ENCODE measurements at regions of chr16 and their contacts with region 1.

Region 1: GRCh38 chr16:30692381-30693064 is 6.4 kb upstream of the SRCAP start:
- DNase-seq: no peak
- ATAC-seq: no peak
- H3K4me3 Mint-ChIP-seq: no peak overlapping the region
- H3K27ac Mint-ChIP-seq: no peak overlapping the region
- H3K4me1 Mint-ChIP-seq: peaks cover 30% of the 10 kb centered on the region
- H3K27me3 Mint-ChIP-seq: no peaks in the 10 kb centered on the region

Region 2: GRCh38 chr16:30637942-30638341 is 54.6 kb before region 1 on chr16:
- CTCF ChIA-PET with region 1: interaction called, 10 read pairs
- DNase-seq: peak; percentile 46
- ATAC-seq: no peak
- H3K4me3 Mint-ChIP-seq: no peak overlapping the region
- H3K27ac Mint-ChIP-seq: no peak overlapping the region
- H3K4me1 Mint-ChIP-seq: peaks cover 18% of the 10 kb centered on the region
- H3K27me3 Mint-ChIP-seq: no peaks in the 10 kb centered on the region

Region 3: DNA sequence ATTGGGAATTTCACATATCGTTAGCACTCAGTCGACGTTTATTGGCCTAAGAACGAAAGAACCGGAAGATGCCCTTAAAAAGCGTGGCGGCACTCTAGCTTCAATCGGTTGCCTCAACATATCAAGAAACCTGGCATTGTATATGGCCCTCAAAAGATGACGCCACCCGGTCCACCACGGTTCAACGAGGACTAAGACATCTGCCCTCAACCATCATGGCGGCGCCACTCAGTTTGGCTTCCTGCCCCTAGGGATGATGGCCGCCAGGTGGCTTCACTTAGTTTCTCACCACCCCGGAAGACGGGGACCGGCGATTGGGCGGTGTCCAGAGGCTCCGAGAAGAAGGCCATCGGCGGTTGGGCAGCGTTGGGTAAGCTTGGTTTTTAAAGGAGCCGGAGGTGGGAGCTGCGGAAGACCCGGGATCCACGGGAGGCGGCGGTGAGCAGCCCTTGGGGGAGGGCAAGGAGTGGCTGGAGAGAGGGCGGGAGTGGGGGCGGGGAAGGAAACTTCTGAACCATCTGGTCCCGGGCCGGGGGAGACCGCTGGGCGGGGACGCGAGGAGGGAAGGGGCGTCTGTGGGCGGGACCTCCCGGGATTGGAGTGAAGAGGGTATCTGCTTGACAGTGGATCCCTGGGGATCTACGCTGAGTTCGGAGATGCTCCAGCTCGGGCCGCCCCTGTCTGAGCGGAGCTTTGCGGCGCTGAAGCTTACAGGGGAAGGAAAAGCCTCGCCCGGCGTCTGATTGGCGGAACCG is 42.0 kb before region 1 on chr16 and contains the start of gene PRR14:
- CTCF ChIA-PET with region 1: interaction called, 23 read pairs
- DNase-seq: peak; percentile 100
- ATAC-seq: peak; percentile 79
- H3K4me3 Mint-ChIP-seq: peak within 1 kb of the TSS; percentile 96
- H3K27ac Mint-ChIP-seq: peak within 1 kb of the TSS; percentile 97
- H3K4me1 Mint-ChIP-seq: peaks cover 33% of the 10 kb centered on the region
- H3K27me3 Mint-ChIP-seq: no peaks in the 10 kb centered on the region
- total RNA-seq, gene PRR14: 111 to 116 TPM

Region 4: GRCh38 chr16:30657866-30658730 is 34.4 kb before region 1 on chr16 and contains the start of gene FBRS:
- CTCF ChIA-PET with region 1: interaction called, 69 read pairs
- DNase-seq: peak; percentile 100
- ATAC-seq: peak; percentile 75
- H3K4me3 Mint-ChIP-seq: peak within 1 kb of the TSS; percentile 86
- H3K27ac Mint-ChIP-seq: peak within 1 kb of the TSS; percentile 100
- H3K4me1 Mint-ChIP-seq: peaks cover 48% of the 10 kb centered on the region
- H3K27me3 Mint-ChIP-seq: no peaks in the 10 kb centered on the region
- total RNA-seq, gene FBRS: 102 to 142 TPM

Region 5: GRCh38 chr16:30677931-30678585 is 14.5 kb before region 1 on chr16:
- CTCF ChIA-PET with region 1: interaction called, 18 read pairs
- DNase-seq: no peak
- ATAC-seq: no peak
- H3K4me3 Mint-ChIP-seq: no peak overlapping the region
- H3K27ac Mint-ChIP-seq: no peak overlapping the region
- H3K4me1 Mint-ChIP-seq: peaks cover 4% of the 10 kb centered on the region
- H3K27me3 Mint-ChIP-seq: no peaks in the 10 kb centered on the region